ENCODE measurements at regions of chr7 and their contacts with region 1.

Region 1: DNA sequence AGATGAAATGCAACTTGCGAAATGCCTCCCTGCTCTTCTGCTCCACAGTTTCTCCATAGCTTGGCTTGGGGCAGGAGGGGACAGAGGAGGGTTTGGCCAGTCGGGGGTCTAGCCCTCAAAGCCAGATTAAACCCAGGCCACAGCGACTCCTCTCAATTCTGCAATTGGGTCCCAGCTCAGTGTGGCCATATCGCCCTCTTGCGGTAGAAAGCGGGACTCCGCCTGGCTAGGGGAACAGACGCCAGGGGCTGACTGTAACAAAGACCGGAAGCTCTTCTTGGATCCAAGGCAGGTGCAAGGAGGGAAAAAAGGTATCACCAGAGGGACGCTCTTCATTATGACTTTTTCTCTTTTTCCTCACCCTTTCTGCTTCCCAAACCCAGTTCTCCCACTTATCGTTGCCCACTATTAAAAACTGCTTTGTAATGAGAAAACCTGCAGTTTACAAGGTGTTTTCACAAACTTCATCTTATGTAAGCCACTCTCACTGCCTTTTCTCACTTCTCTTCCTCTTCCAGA is 36.6 kb upstream of the TNPO3 start:
- DNase-seq: peak; percentile 62
- ATAC-seq: peak; percentile 87
- H3K4me3 ChIP-seq: no peak overlapping the region
- H3K27ac ChIP-seq: peak overlapping the region; percentile 48
- H3K4me1 ChIP-seq: peaks cover 40% of the 10 kb centered on the region
- H3K27me3 ChIP-seq: no peaks in the 10 kb centered on the region
- CTCF ChIP-seq: peak; percentile 98 to 99 (median 98); a peak in 5 of 6 replicates
- EP300 ChIP-seq: no peak
- POLR2A ChIP-seq: no peak
- RAD21 ChIP-seq: peak; percentile 99

Region 2: GRCh38 chr7:128883622-128884501 is 207.7 kb before region 1 on chr7:
- CTCF ChIA-PET with region 1: interaction called, 21 read pairs
- POLR2A ChIA-PET with region 1: no interaction called
- RAD21 ChIA-PET with region 1: interaction called, 12 read pairs
- SMC1A ChIA-PET with region 1: interaction called, 7 read pairs
- in situ Hi-C with region 1: no loop called
- intact Hi-C with region 1: no loop called
- DNase-seq: peak; percentile 48
- ATAC-seq: peak; percentile 95
- H3K4me3 ChIP-seq: peak overlapping the region; percentile 70
- H3K27ac ChIP-seq: peak overlapping the region; percentile 74
- H3K4me1 ChIP-seq: peaks cover 12% of the 10 kb centered on the region
- H3K27me3 ChIP-seq: no peaks in the 10 kb centered on the region
- CTCF ChIP-seq: peak; percentile 90 to 96 (median 91)
- EP300 ChIP-seq: no peak; a peak in 1 of 4 replicates
- POLR2A ChIP-seq: peak; percentile 77
- RAD21 ChIP-seq: peak; percentile 81

Region 3: GRCh38 chr7:128940494-128941322 is 150.8 kb before region 1 on chr7:
- CTCF ChIA-PET with region 1: interaction called, 17 read pairs
- POLR2A ChIA-PET with region 1: interaction called, 7 read pairs
- RAD21 ChIA-PET with region 1: interaction called, 20 read pairs
- SMC1A ChIA-PET with region 1: interaction called, 15 read pairs
- in situ Hi-C with region 1: no loop called
- intact Hi-C with region 1: no loop called
- DNase-seq: peak; percentile 66
- ATAC-seq: peak; percentile 72
- H3K4me3 ChIP-seq: peak overlapping the region; percentile 71
- H3K27ac ChIP-seq: peak overlapping the region; percentile 96
- H3K4me1 ChIP-seq: peaks cover 32% of the 10 kb centered on the region
- H3K27me3 ChIP-seq: no peaks in the 10 kb centered on the region
- CTCF ChIP-seq: no peak
- EP300 ChIP-seq: peak; percentile 61 to 78; a peak in 2 of 4 replicates
- POLR2A ChIP-seq: peak; percentile 81
- RAD21 ChIP-seq: no peak

Region 4: DNA sequence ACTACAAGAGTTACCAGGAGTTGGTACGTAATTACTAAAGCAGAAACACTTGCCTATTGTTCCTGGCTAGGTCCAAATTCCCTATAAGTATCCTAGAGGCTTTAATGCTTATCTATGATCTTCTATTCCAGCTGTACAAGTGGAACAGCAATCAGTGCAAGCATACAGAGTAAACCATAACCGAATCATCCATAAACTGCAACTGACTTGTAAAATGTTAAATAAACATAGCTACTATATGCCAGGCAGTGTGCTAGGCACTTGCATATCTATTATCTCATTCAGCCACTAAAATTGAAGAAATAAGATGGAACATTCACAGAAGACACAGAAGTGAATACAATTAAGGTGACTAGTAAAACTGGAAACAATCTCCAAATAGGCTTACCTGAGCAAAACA is 98.1 kb before region 1 on chr7:
- CTCF ChIA-PET with region 1: interaction called, 20 read pairs
- POLR2A ChIA-PET with region 1: no interaction called
- RAD21 ChIA-PET with region 1: interaction called, 3 read pairs
- SMC1A ChIA-PET with region 1: interaction called, 8 read pairs
- in situ Hi-C with region 1: no loop called
- intact Hi-C with region 1: no loop called
- DNase-seq: no peak
- ATAC-seq: no peak
- H3K4me3 ChIP-seq: no peak overlapping the region
- H3K27ac ChIP-seq: no peak overlapping the region
- H3K4me1 ChIP-seq: no peaks in the 10 kb centered on the region
- H3K27me3 ChIP-seq: no peaks in the 10 kb centered on the region
- CTCF ChIP-seq: no peak
- EP300 ChIP-seq: no peak
- POLR2A ChIP-seq: no peak
- RAD21 ChIP-seq: no peak

Region 5: DNA sequence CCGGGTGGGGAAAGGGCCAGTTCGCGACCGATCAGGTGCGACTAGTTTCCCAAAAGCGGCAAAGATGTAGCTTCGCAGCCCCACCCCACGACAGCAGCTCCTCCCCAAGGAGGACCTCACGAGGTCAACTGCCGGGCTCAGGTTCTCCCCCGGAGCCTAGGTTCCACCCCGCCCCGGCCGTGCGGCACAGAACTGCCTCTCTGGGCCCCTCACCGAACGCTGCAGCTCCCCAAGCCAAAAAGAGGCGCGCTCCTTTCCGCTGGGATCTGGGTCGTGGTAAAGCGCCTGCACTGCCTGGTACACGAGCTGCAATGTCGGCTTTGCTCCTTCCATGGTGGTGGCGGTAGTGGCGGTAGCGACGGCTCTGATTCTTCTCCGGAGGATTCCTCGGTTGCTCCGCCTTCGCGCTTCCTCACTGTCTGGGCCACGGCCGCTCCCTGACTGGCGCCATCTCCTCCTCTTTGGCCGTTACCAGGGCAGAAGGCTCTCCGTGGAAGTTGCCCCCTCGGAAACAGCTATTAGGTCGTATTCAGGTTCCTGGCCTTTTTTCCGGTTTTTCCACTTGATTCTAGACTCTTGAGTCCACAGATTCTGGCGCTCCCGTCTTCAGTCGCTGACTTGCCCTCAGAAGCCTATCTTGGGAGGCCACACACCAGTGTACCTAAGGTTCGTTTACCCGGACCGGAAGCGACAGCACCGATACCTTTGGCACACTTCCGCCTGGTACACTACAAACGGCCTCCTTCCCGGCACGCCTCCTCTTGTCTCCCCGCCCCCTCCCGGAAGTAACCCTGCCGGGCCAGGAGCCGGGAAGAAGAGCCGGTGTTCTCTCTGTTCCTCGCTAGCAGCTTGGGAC is 36.9 kb before region 1 on chr7 and contains the start of gene TNPO3:
- CTCF ChIA-PET with region 1: interaction called, 14 read pairs
- POLR2A ChIA-PET with region 1: no interaction called
- RAD21 ChIA-PET with region 1: interaction called, 32 read pairs
- SMC1A ChIA-PET with region 1: interaction called, 24 read pairs
- in situ Hi-C with region 1: no loop called
- intact Hi-C with region 1: loop called (anchors 5 kb)
- DNase-seq: peak; percentile 78
- ATAC-seq: peak; percentile 88
- H3K4me3 ChIP-seq: peak within 1 kb of the TSS; percentile 97
- H3K27ac ChIP-seq: peak within 1 kb of the TSS; percentile 93
- H3K4me1 ChIP-seq: peaks cover 5% of the 10 kb centered on the region
- H3K27me3 ChIP-seq: no peaks in the 10 kb centered on the region
- CTCF ChIP-seq: no peak
- EP300 ChIP-seq: no peak
- POLR2A ChIP-seq: peak; percentile 97
- RAD21 ChIP-seq: 0 out of 2 replicates have a peak, but pooled peaks have one; percentile 7
- polyA plus RNA-seq, gene TNPO3: 17.6 to 23.5 TPM

Region 6: GRCh38 chr7:129144095-129144833 is 52.7 kb after region 1 on chr7 and contains the start of gene TSPAN33:
- CTCF ChIA-PET with region 1: interaction called, 21 read pairs
- POLR2A ChIA-PET with region 1: interaction called, 3 read pairs
- RAD21 ChIA-PET with region 1: interaction called, 29 read pairs
- SMC1A ChIA-PET with region 1: interaction called, 21 read pairs
- in situ Hi-C with region 1: no loop called
- intact Hi-C with region 1: loop called (anchors 2 kb)
- DNase-seq: no peak
- ATAC-seq: peak; percentile 76
- H3K4me3 ChIP-seq: peak within 1 kb of the TSS; percentile 97
- H3K27ac ChIP-seq: peak within 1 kb of the TSS; percentile 92
- H3K4me1 ChIP-seq: peaks cover 28% of the 10 kb centered on the region
- H3K27me3 ChIP-seq: no peaks in the 10 kb centered on the region
- CTCF ChIP-seq: no peak
- EP300 ChIP-seq: no peak
- POLR2A ChIP-seq: peak; percentile 73
- RAD21 ChIP-seq: no peak
- polyA plus RNA-seq, gene TSPAN33: 17.8 to 30.0 TPM

Measured in GM12878 (cell line).